ENCODE measurements at regions of chr11 and their contacts with region 1.

Region 1: GRCh38 chr11:128497061-128497775 is 90.1 kb downstream of the ETS1 start:
- DNase-seq: no peak
- H3K4me3 Mint-ChIP-seq: peak overlapping the region; percentile 72
- H3K27ac Mint-ChIP-seq: peak overlapping the region; percentile 88
- H3K4me1 Mint-ChIP-seq: peaks cover 95% of the 10 kb centered on the region
- H3K27me3 Mint-ChIP-seq: no peaks in the 10 kb centered on the region

Region 2: GRCh38 chr11:128246364-128246801 is 250.8 kb before region 1 on chr11:
- CTCF ChIA-PET with region 1: no interaction called
- POLR2A ChIA-PET with region 1: no interaction called
- DNase-seq: no peak
- H3K4me3 Mint-ChIP-seq: no peak overlapping the region
- H3K27ac Mint-ChIP-seq: no peak overlapping the region
- H3K4me1 Mint-ChIP-seq: no peaks in the 10 kb centered on the region
- H3K27me3 Mint-ChIP-seq: no peaks in the 10 kb centered on the region

Region 3: GRCh38 chr11:128453444-128454336 is 43.5 kb before region 1 on chr11:
- CTCF ChIA-PET with region 1: no interaction called
- POLR2A ChIA-PET with region 1: no interaction called
- DNase-seq: no peak
- H3K4me3 Mint-ChIP-seq: no peak overlapping the region
- H3K27ac Mint-ChIP-seq: peak overlapping the region; percentile 14
- H3K4me1 Mint-ChIP-seq: peaks cover 56% of the 10 kb centered on the region
- H3K27me3 Mint-ChIP-seq: no peaks in the 10 kb centered on the region

Region 4: DNA sequence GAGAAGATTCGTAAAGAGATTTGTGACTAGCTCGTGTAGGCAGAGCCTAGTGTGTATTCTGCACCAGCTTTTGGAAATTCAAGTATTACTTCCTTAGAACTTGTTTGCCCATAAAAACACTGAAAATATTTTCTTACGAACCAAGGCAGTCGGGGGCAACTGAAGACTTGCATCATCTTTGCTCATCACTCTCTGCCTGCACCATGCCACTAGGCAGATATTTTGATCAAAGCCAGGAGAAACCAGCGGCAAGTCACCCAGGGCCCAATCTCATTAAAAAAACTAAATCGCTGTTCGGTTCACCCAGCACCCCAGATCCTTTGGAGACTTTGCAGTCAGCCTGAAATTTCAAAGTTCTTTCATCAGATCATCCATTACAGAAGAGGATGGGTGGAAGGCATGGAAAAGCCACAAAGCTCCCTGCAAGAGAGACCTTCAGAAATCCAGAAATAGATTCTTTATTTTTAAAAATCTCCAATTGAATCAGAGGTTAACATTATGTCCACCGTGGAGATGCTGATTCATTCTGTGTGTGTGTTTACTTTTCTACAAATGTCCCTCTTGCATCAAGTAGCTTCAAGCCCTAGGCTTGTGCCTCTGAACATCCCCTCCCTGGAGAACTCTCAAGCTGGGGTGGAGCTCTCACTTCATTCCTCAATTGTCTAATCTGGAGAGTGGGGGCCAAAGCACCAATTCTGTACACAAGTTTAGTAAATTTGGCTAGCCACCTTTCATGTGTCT is 11.7 kb after region 1 on chr11:
- CTCF ChIA-PET with region 1: interaction called, 19 read pairs
- POLR2A ChIA-PET with region 1: interaction called, 5 read pairs
- DNase-seq: no peak
- H3K4me3 Mint-ChIP-seq: peak overlapping the region; percentile 71
- H3K27ac Mint-ChIP-seq: peak overlapping the region; percentile 89
- H3K4me1 Mint-ChIP-seq: peaks cover 97% of the 10 kb centered on the region
- H3K27me3 Mint-ChIP-seq: no peaks in the 10 kb centered on the region

Region 5: DNA sequence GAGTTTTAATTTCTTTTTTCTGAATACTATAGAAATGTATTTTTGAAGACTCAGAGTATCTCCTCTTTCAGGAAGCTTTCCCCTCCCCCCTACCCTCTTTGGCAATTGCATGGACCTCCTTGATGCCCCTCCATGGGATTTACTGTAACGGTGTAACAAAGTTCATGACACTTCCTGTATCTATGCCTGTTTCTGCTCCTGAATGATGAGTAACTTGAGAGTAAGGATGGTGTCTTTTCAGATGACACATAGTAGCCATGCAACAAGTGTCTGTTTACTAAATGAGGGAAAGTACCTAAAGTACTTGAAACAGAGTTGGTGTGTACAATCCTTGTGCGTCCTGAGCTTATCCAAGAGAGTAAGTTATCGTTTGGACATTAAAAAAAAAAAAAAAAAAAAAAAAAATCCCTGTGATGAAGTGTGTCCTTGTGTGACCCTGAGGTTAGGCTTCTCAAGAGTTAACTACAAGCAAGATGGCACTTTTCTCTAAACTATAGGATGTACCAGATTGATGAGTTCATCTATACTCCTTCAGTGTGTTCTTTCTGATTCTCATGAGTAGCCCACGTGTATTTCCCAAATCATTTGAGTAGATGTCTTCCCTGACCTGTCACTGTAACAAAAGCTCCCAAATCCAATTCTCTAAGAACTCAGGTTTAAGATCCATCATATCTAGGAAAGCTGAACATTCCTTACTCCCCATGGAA is 82.7 kb after region 1 on chr11:
- CTCF ChIA-PET with region 1: no interaction called
- POLR2A ChIA-PET with region 1: no interaction called
- DNase-seq: no peak
- H3K4me3 Mint-ChIP-seq: no peak overlapping the region
- H3K27ac Mint-ChIP-seq: no peak overlapping the region
- H3K4me1 Mint-ChIP-seq: peaks cover 41% of the 10 kb centered on the region
- H3K27me3 Mint-ChIP-seq: no peaks in the 10 kb centered on the region

Measured in activated CD4-positive, alpha-beta T cell treated with anti-CD3 and anti-CD28 coated beads, Interleukin-2, amount 10 ng/mL, durations not matched to agents 7 days and 5 days (primary cell).